Dorsolateral prefrontal cortex (tissue), 120 donors: ENCODE measurements at regions of chr15 and their contacts with region 1.

Region 1: GRCh38 chr15:58585693-58586443 is 154.1 kb downstream of the LIPC start:
- DNase-seq: no peak
- H3K4me3 ChIP-seq: no peak overlapping the region
- H3K27ac ChIP-seq: no peak overlapping the region
- H3K27me3 ChIP-seq: no peaks in the 10 kb centered on the region
- CTCF ChIP-seq: no peak

Region 2: GRCh38 chr15:58423831-58424608 is 161.8 kb before region 1 on chr15:
- intact Hi-C with region 1: loop called in 1 of 2 experiments (anchors 10 kb)
- DNase-seq: no peak
- H3K4me3 ChIP-seq: no peak overlapping the region
- H3K27ac ChIP-seq: no peak overlapping the region
- H3K27me3 ChIP-seq: no peaks in the 10 kb centered on the region
- CTCF ChIP-seq: no peak